Dorsolateral prefrontal cortex (tissue), 120 donors: ENCODE measurements at regions of chr7 and their contacts with region 1.

Region 1: DNA sequence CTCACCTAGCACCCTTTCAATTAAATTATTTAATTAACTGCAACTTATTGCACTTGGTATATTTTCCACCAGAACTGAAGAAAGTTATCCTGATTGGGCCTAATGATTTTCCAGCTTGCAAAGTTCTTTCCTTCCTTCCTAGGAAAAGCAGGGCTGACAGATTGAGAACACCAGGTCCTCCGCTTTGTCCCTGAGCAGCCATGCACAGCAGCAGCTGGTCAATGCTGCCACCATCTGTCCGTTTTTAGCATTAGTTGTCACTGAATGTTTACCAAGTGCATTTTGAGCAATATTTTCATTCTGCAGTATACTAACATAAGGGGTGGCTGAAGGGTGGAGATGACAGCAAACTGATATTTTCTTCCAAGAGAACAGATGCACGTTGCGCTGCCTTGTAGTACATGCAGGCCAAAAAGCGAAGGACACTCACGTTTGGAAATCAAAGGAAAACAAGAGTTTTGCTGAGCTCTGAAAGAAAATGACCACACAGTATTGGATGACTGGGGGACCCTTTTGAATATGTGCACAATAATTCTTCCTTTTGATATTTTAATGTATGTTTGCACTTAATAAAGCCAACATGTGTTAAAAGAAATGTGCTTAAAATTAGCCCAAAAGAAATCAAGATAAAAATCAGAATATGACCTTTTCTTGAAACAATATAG is 248.8 kb upstream of the PTN start:
- DNase-seq: peak in 9 of 10 donors; percentile 57 to 82 (median 64)
- H3K4me3 ChIP-seq: no peak overlapping the region
- H3K27ac ChIP-seq: peak overlapping the region in 7 of 59 donors; percentile 2 to 50 (median 30)
- H3K27me3 ChIP-seq: no peaks in the 10 kb centered on the region
- CTCF ChIP-seq: peak; percentile 54 to 93 (median 79)

Region 2: DNA sequence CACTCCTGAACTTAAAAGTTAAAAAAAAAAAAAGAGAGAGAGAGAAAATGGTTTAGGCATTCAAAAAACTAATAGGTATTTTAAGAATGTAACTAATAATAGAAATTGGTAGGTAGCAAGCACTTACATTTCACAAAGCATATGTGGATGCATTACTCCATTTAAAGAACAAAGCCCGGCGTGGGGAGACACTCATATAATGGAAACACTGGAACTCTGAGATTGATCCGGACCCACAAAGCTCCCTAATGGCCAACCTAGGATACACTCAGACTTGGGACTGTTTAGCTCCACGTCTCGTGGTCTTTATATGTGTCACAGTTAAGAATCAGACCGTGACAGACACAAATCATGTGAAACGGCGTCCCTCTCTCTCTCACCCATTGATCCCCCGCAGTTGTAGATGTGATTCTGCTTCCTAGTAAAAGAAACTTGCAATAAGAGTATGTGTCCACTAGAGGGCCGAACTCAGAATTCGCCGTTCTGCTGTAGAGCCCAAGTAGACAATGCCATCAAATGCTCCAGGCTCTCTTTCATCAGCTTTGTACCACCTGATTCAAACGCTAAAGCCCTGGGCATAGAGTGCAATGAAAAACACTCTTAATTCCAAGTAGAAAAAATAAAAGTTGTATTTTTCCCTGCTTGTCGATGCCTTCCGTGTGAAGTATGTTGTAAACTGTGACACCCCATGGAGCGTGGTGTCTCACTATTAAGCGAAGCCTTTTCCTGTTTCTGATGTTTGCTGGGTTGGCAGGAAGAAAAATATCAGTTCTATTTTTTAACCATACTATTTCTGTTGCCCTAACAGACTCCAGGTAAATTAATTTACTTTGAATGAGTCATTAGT is 1186.2 kb before region 1 on chr7:
- intact Hi-C with region 1: loop called in 1 of 2 experiments (anchors 10 kb)
- DNase-seq: peak in 5 of 10 donors; percentile 7 to 46 (median 31)
- H3K4me3 ChIP-seq: peak overlapping the region in 37 of 59 donors; percentile 3 to 58 (median 30)
- H3K27ac ChIP-seq: no peak overlapping the region
- H3K27me3 ChIP-seq: no peaks in the 10 kb centered on the region
- CTCF ChIP-seq: peak; percentile 63 to 89 (median 80)

Region 3: DNA sequence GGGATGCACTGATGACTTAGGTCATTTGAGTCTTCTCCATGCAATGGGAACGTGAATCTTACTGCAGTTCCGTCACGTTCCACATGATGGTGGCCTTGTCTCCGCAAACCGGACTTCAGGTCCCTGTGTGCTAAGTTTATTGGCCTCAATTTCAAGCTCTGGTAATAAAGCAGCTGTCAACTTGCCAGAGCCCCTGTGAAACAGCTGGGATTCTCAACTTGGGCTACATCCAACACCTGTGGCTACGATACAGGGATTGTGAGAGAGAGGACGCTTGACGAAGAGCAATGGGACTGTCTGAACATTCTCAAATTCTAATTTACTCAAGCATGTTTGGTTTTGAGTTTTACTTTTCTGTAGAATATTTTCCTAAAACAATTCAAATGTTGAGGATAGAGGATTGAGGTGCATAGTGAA is 423.1 kb before region 1 on chr7:
- intact Hi-C with region 1: loop called in 1 of 2 experiments (anchors 5 kb)
- DNase-seq: peak; percentile 19 to 80 (median 54)
- H3K4me3 ChIP-seq: peak overlapping the region in 13 of 59 donors; percentile 2 to 37 (median 30)
- H3K27ac ChIP-seq: no peak overlapping the region
- H3K27me3 ChIP-seq: no peaks in the 10 kb centered on the region
- CTCF ChIP-seq: peak in 55 of 56 donors; percentile 47 to 92 (median 77)

Region 4: DNA sequence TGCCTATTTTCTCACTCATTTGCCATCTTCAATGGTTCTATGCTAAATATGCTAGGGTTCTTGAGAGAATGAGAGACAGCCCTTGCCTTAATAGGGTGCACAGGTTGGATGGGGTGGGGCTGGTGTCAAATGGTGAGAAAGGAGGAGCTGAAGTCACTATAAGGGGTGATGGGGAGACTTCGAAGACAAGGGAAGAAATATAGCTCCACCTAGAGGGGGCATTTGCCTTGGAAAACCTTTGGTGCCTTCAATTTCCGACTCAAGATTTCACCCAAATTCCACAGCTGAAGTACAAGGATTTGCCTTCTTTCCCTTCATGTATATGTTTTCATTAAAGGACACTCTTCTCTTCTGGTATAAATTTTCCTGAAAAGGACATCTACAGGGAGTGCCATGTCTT is 254.5 kb before region 1 on chr7:
- intact Hi-C with region 1: loop called in 1 of 2 experiments (anchors 10 kb)
- DNase-seq: no peak
- H3K4me3 ChIP-seq: peak overlapping the region in 11 of 59 donors; percentile 3 to 18 (median 13)
- H3K27ac ChIP-seq: peak overlapping the region in 25 of 59 donors; percentile 3 to 91 (median 38)
- H3K27me3 ChIP-seq: no peaks in the 10 kb centered on the region
- CTCF ChIP-seq: peak in 53 of 56 donors; percentile 10 to 65 (median 36)

Region 5: DNA sequence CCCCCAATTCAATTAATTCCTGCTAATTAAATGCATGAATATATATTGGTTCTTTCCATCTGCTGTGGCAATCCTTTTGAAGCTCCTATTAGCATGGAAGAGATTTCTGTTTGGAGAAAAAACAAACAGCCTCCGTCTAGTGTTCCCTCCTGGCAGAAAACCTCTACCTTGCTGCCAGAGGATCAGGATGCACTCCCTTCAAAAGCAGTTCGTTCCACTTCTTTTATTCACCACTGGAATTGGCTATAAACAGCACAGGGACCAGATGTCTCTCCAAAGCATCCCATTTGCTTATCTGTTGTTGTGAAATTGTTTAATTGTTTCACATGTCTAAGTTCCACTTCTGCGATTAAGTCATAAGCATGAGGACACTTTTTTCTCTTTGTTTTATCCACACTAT is 171.0 kb before region 1 on chr7:
- intact Hi-C with region 1: no loop called
- DNase-seq: no peak
- H3K4me3 ChIP-seq: no peak overlapping the region
- H3K27ac ChIP-seq: peak overlapping the region in 1 of 59 donors; percentile 18
- H3K27me3 ChIP-seq: no peaks in the 10 kb centered on the region
- CTCF ChIP-seq: no peak